ENCODE measurements at regions of chrX and their contacts with region 1.

Region 1: GRCh38 chrX:136251041-136251991 is at the start of gene MAP7D3:
- DNase-seq: peak; percentile 54 to 74 (median 66)
- H3K4me3 ChIP-seq: peak within 1 kb of the TSS; percentile 65 to 82 (median 69)
- H3K27ac ChIP-seq: peak within 1 kb of the TSS in 1 of 2 experiments; percentile 25
- H3K4me1 ChIP-seq: peaks cover 2 to 12% (median 4%) of the 10 kb centered on the region in 4 experiments
- H3K27me3 ChIP-seq: peaks cover 0 to 9% (median 0%) of the 10 kb centered on the region in 5 experiments

Region 2: DNA sequence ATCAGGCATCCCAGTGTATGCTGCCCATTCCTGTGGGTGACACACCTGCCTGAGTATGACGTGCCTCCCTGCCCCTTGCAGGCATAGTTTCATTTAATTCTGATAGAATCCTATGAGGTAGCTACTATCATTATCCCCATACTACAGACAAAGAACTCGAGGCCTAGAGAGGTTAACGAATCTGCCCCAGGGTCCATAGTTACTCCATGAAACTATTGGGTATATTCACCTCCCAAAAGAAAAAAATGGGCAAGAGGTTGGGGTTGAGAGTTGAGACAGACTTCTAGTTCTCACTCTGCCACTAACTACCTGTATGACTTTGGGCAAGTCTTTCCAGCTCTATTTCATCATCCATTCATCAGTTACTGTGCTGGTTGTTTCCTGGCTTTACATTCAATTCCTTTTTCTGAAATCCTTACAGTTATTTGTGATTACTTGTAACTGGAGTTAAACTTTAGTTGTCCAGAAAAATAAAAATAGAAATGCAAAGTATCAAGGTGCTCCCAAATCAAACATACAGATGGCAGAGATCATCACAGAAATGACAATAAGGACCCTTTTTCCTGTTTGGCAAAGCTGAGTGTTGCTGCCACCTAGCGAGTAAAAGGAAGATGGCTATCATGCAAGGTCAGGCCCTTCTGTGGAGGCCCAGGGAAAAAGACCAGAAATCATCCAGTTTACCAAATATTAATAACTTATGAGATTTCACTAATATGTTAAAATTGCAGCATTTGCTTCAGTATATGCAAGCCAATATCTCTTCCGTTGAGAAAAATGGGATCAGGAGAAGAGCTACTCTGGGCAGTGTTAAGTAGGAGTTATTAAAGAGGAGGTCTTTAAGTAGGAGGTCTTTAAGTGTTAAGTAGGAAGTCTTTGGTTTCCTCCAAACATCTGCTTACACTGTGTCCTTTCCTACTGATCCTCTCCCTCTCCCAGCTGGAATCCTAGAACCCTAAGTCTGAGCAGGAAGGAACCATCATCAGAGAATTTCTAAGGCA is 17.0 kb after region 1 on chrX:
- CTCF ChIA-PET with region 1: interaction called, 8 read pairs
- POLR2A ChIA-PET with region 1: interaction called, 13 read pairs
- DNase-seq: peak; percentile 38 to 70 (median 67)
- H3K4me3 ChIP-seq: no peak overlapping the region
- H3K27ac ChIP-seq: no peak overlapping the region
- H3K4me1 ChIP-seq: peaks cover 0 to 29% (median 16%) of the 10 kb centered on the region in 4 experiments
- H3K27me3 ChIP-seq: no peaks in the 10 kb centered on the region

Measured in common myeloid progenitor, CD34-positive (primary cell).